ENCODE measurements at regions of chr20 and their contacts with region 1.

Region 1: GRCh38 chr20:39264506-39265172 is 302.5 kb downstream of the DHX35 start:
- DNase-seq: peak in 4 of 5 donors; percentile 56 to 69 (median 64)
- ATAC-seq: peak; percentile 39 to 82 (median 58)
- H3K4me3 ChIP-seq: no peak overlapping the region
- H3K27ac ChIP-seq: no peak overlapping the region
- H3K4me1 ChIP-seq: peaks cover 0 to 17% (median 3%) of the 10 kb centered on the region in 12 donors
- H3K27me3 ChIP-seq: peaks cover 0 to 8% (median 0%) of the 10 kb centered on the region in 9 donors
- CTCF ChIP-seq: peak; percentile 69 to 89 (median 84)
- POLR2A ChIP-seq: no peak

Region 2: DNA sequence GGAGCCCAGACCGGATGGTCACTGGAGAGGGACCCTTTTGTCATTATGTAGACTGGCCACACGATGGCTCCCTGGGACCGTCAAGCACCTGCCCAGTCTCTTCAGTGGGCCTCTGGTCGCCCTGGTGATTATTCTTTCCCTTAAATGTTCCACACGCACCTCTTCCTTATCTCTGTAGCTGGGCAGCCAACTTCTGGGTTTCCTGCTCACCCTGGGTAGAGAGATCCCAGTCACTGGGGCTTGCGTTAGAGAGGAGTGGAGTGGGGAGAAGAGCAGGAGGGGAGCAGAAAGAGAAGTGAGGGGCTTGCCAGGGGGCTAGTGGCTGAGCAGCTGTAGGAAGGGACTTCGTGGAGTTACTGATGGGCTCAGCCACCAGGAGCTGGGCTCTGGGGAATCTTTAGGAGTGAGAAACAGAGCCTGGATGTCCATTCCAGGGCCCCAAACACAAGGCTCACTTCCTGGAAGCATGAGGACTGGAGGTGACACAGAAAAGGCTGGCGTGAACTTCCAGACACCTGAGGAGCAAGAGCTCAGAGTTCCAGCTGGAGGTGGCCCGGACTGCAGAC is 152.4 kb before region 1 on chr20:
- intact Hi-C with region 1: loop called in 3 of 10 experiments (anchors 5 to 10 kb)
- DNase-seq: peak in 4 of 5 donors; percentile 30 to 51 (median 39)
- ATAC-seq: peak; percentile 73 to 89 (median 84)
- H3K4me3 ChIP-seq: no peak overlapping the region
- H3K27ac ChIP-seq: no peak overlapping the region
- H3K4me1 ChIP-seq: peaks cover 0 to 5% (median 1%) of the 10 kb centered on the region in 12 donors
- H3K27me3 ChIP-seq: peaks cover 0 to 35% (median 14%) of the 10 kb centered on the region in 9 donors
- CTCF ChIP-seq: peak; percentile 43 to 71 (median 63)
- POLR2A ChIP-seq: no peak

Region 3: GRCh38 chr20:39676857-39677391 is 412.3 kb after region 1 on chr20:
- intact Hi-C with region 1: loop called in 1 of 10 experiments (anchors 10 kb)
- DNase-seq: no peak
- ATAC-seq: no peak
- H3K4me3 ChIP-seq: no peak overlapping the region
- H3K27ac ChIP-seq: no peak overlapping the region
- H3K4me1 ChIP-seq: no peaks in the 10 kb centered on the region
- H3K27me3 ChIP-seq: no peaks in the 10 kb centered on the region
- CTCF ChIP-seq: no peak
- POLR2A ChIP-seq: no peak

Region 4: DNA sequence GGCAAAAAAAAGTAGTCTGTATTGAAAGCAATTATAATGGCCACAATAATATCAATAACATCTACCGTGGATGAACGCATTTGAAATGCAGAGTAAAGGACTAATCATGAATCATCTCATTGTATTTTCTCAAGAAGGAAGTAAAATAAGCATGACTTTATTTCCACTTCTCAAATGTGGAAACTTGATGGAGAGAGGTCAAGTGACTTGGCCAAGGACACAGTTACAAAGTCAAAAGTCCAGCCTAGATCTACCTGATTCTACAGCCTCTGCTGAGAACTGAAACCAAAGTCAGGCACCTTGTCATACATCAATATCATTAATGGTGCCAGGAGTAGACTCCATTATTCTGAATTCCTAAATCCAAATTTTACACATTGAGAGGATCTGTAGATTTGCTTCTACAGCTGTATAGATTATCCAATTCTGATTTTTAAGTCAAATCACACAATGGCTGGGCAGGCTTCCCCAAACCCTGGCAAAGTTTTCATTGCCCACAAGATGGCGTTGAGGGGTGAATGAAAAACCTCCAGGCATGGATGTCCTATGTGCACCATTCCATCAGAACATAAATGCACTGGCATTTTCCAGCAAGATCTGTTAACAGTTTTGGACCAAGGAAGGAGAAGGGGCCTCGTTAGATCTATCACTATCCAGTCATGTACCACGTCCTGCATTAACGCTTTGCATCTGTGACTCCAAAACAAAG is 1001.3 kb after region 1 on chr20:
- intact Hi-C with region 1: loop called in 1 of 10 experiments (anchors 10 kb)
- DNase-seq: peak in 1 of 5 donors; percentile 33
- ATAC-seq: peak in 2 of 4 donors; percentile 55 to 66
- H3K4me3 ChIP-seq: no peak overlapping the region
- H3K27ac ChIP-seq: peak overlapping the region in 1 of 12 donors; percentile 9
- H3K4me1 ChIP-seq: peaks cover 0 to 25% (median 0%) of the 10 kb centered on the region in 12 donors
- H3K27me3 ChIP-seq: peaks cover 0 to 3% (median 0%) of the 10 kb centered on the region in 9 donors
- CTCF ChIP-seq: peak in 11 of 12 donors; percentile 20 to 63 (median 41)
- POLR2A ChIP-seq: no peak

Region 5: DNA sequence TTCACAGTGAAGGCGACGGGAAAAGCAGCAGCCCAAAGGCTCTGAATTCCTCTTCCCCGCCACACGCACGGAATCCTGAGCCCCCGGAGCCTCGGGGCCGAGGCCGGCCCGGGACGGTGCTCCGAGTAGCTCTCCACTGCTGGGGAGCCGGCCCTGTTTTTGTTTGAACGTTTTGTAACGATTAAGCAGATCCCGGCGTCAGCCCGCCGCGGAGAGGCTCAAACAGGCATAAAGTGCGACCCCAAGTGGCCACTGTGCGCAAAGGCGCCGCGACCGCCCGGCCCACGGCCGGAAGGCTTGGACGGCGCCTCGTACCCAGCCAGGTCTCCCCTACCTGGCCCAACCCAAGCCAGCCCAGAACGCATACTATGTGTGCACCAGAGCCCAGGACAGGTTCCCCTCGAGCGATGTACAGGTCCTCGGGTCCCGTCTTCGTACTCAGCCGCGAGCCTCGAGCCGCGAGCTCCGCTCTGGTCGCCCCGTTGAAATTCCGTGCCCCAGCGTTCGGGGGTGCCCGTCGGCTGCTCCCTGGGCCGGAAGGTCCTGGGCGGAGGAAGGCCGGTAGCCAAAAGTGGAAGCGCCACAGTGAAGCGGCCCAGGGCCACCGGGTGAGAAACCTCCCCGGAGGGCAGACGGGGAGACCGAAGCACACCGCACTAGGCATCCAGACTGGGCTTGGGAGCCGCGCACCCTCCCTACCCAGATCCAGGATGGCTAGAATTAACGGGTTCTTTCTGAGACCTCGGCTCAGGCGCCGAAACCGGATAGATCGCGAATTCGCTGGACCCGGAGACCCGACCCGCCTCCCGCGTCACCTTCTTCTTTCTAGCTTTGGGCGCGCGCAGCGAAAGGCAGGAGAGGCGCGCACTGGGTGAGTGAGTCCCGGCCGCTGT is 1425.5 kb after region 1 on chr20:
- intact Hi-C with region 1: loop called in 4 of 10 experiments (anchors 5 to 10 kb)
- DNase-seq: peak; percentile 89 to 95 (median 91)
- ATAC-seq: peak; percentile 59 to 78 (median 65)
- H3K4me3 ChIP-seq: peak overlapping the region; percentile 36 to 86 (median 70)
- H3K27ac ChIP-seq: peak overlapping the region; percentile 92 to 99 (median 98)
- H3K4me1 ChIP-seq: peaks cover 0 to 53% (median 20%) of the 10 kb centered on the region in 12 donors
- H3K27me3 ChIP-seq: peaks cover 29 to 69% (median 51%) of the 10 kb centered on the region in 9 donors
- CTCF ChIP-seq: peak; percentile 90 to 97 (median 96)
- POLR2A ChIP-seq: no peak

Region 6: DNA sequence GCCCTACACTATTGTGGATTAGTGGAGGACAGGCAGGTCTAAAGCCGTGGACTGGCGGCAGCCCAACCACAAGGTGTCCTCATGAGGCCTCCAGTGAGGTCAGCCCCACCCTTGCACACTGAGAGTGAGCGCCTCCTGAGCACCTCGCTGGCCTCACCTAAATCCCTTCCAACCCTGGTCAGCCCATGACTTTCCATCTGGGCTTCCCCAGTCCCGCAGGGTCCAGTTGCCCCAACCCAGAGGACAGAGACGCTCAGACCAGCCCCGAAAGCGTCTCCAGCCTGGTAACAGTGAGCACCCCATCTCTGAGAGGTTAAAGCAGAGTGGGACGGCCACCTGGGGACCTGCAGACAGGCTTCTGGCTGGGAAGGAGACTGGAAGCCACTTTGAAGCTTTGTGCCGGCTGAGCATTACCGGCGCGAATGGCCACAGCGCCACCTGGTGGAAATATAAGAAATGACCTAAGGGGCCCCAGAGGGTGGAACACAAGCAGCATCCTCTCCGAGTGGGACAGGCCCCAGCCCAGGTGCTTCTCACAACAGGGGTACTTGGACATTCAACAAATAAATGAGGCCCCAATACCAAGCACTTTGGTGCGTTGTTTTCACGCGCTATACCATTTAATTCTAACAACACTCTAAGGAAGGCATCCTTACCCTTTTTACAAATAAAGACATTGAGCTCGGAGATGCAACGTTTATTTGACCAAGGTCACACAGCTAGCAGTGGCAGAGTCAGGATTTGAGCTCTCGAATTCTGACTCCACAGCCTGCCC is 1698.3 kb after region 1 on chr20:
- intact Hi-C with region 1: loop called in 8 of 10 experiments (anchors 2 to 10 kb)
- DNase-seq: peak; percentile 59 to 78 (median 60)
- ATAC-seq: peak; percentile 65 to 87 (median 83)
- H3K4me3 ChIP-seq: no peak overlapping the region
- H3K27ac ChIP-seq: no peak overlapping the region
- H3K4me1 ChIP-seq: peaks cover 0 to 3% (median 0%) of the 10 kb centered on the region in 12 donors
- H3K27me3 ChIP-seq: no peaks in the 10 kb centered on the region
- CTCF ChIP-seq: peak; percentile 82 to 97 (median 91)
- POLR2A ChIP-seq: no peak

Measured in heart left ventricle (tissue), 16 donors.